Tibial artery (tissue), 4 donors: ENCODE measurements at regions of chr16 and their contacts with region 1.

Region 1: GRCh38 chr16:70534971-70535370 is 11.4 kb downstream of the SF3B3 start:
- DNase-seq: no peak
- H3K4me3 ChIP-seq: no peak overlapping the region
- H3K27ac ChIP-seq: no peak overlapping the region
- H3K4me1 ChIP-seq: no peaks in the 10 kb centered on the region
- H3K27me3 ChIP-seq: no peaks in the 10 kb centered on the region
- CTCF ChIP-seq: no peak

Region 2: DNA sequence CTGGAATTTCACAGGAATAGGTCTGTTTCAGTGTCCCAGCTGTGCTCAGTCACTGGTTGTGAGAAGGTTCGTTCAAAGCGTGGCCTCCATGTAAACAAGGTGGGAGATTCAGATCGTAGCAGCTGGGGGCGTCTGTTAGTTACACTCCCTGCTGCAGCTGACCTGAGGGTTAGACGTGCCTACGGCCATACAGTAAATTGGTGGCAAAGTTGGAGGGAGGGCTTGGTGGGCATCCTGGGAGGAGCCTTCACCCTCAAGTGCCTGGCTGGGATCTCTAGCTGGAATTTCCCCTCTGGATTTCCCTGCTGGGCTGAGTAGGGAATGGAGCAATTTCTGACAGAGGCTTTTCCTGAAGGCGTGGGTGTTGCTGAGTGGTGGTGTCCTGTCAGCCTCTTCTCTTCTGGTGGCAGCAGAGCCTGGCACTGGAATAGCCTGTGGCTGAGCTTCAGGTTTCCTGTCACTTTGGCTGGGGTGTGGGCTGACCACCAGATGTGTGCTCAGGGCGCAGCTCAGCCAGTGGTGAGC is 74.2 kb before region 1 on chr16:
- intact Hi-C with region 1: no loop called
- DNase-seq: no peak
- H3K4me3 ChIP-seq: no peak overlapping the region
- H3K27ac ChIP-seq: no peak overlapping the region
- H3K4me1 ChIP-seq: peaks cover 0 to 3% (median under 1%) of the 10 kb centered on the region in 4 donors
- H3K27me3 ChIP-seq: no peaks in the 10 kb centered on the region
- CTCF ChIP-seq: no peak

Region 3: DNA sequence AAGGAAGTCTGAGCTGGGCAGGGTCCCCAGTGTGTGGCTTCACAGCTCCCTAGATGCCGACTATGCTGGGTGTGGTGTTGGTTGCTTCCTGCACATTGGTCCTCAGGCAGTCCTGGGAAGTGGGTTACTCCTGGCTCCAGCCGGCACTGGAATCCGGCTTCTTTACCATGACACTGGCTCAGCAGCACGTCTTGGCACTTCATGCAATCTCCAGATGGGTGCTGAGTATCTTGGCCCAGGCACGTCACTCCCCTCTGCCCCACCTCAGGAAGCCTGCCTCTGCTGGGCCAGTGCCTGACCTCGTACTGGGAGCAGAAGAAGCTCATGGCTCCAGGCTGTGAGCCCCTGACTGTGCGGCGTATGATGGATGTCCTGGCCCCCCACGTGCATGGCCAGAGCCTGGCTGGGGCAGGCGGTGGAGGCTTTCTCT is 56.0 kb before region 1 on chr16:
- intact Hi-C with region 1: no loop called
- DNase-seq: peak in 1 of 2 donors; percentile 31
- H3K4me3 ChIP-seq: no peak overlapping the region
- H3K27ac ChIP-seq: no peak overlapping the region
- H3K4me1 ChIP-seq: peaks cover 0 to 15% (median 3%) of the 10 kb centered on the region in 4 donors
- H3K27me3 ChIP-seq: no peaks in the 10 kb centered on the region
- CTCF ChIP-seq: no peak

Region 4: GRCh38 chr16:70627696-70628095 is 92.7 kb after region 1 on chr16:
- intact Hi-C with region 1: no loop called
- DNase-seq: no peak
- H3K4me3 ChIP-seq: no peak overlapping the region
- H3K27ac ChIP-seq: no peak overlapping the region
- H3K4me1 ChIP-seq: peaks cover 0 to 7% (median 0%) of the 10 kb centered on the region in 4 donors
- H3K27me3 ChIP-seq: no peaks in the 10 kb centered on the region
- CTCF ChIP-seq: no peak

Region 5: DNA sequence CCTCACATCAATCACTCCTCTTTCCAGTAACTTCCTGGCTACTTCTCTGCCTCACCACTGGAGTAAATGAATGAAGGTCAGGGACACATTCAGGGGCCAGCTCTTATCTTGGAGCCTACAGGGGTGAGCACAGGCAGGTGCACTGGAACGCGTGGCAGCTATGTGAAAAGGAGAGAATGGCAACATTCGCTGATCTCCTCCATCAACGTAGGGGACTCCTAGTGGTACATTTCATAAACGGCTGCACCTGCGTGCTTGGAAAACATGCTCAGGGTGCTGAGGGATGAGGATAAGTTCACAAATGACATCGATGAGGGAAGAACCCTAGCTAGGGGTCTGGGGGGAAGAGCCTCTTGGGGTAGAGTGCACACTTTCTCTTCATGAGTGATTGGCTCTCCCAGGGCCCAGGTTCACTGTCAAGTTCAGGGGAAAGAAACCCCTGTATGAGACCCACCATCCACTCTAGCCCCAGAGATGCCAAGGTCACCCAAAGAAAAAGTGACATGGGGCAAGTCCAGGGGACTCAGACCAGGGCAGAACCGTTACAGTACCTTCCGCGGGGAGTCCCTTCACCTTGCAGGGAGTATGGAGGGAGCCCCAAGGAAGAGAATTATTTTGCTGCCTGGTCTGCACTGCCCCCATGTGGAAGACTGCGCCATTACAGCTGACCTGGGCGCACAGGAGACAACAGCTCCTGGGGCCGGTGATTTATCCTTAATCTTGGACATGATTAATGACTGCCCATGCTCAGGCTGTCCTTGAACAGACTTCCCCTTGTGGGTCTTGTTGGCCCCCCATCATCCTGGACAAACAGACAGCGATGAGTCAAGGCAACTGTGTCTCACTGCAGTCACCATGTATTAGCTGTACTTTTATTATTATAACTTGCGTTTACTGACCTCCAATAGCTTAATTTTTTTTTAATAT is 235.9 kb after region 1 on chr16:
- intact Hi-C with region 1: loop called (anchors 10 kb)
- DNase-seq: peak; percentile 42 to 79
- H3K4me3 ChIP-seq: no peak overlapping the region
- H3K27ac ChIP-seq: no peak overlapping the region
- H3K4me1 ChIP-seq: peaks cover 0 to 19% (median 4%) of the 10 kb centered on the region in 4 donors
- H3K27me3 ChIP-seq: no peaks in the 10 kb centered on the region
- CTCF ChIP-seq: peak; percentile 94 to 99